ENCODE measurements at regions of chr15 and their contacts with region 1.

Region 1: DNA sequence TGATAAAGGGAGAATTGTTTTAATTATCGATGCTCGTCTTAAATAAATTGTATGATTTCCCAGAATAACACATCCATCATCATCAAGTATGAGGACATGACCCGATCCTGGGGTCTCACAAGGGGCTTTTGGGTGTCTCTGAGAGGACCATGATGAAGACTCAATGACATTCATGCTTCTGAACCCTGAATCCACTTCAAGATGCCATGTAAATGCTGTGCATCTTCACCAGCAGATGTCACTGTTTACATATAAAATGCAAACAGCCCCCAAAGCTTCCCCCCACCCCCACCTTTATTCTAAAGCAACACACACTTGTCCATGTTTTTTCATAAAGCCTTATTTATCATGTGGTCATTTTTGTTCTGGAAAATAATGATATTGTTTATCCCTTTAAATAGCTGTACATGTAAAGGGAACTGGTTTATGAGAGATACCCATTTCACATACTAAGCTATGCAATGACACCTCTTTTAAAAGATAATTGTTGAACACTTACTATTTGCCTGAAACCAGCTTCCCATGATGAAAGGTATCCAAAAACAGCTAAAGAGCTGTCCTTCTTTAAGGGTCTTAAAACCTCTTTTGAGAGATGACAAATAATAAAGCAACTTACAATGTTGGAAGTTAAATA is 69.7 kb upstream of the UBE3A start:
- DNase-seq: peak; percentile 52 to 55 (median 54)
- ATAC-seq: peak; percentile 70
- H3K4me3 ChIP-seq: no peak overlapping the region
- H3K27ac ChIP-seq: no peak overlapping the region
- H3K4me1 ChIP-seq: no peaks in the 10 kb centered on the region
- H3K27me3 ChIP-seq: no peaks in the 10 kb centered on the region
- CTCF ChIP-seq: peak; percentile 52 to 76 (median 67); a peak in 5 of 6 replicates
- EP300 ChIP-seq: no peak
- POLR2A ChIP-seq: no peak
- RAD21 ChIP-seq: peak; percentile 60 to 80

Region 2: GRCh38 chr15:25693321-25694237 is 185.1 kb after region 1 on chr15:
- CTCF ChIA-PET with region 1: no interaction called
- POLR2A ChIA-PET with region 1: no interaction called
- in situ Hi-C with region 1: no loop called
- intact Hi-C with region 1: loop called (anchors 10 kb)
- DNase-seq: peak; percentile 31 to 46 (median 44)
- ATAC-seq: peak; percentile 91
- H3K4me3 ChIP-seq: no peak overlapping the region
- H3K27ac ChIP-seq: no peak overlapping the region
- H3K4me1 ChIP-seq: no peaks in the 10 kb centered on the region
- H3K27me3 ChIP-seq: peaks cover 0 to 39% of the 10 kb centered on the region in 2 experiments; a peak in 2 of 5 replicates
- CTCF ChIP-seq: peak; percentile 65 to 79 (median 65)
- EP300 ChIP-seq: no peak
- POLR2A ChIP-seq: no peak
- RAD21 ChIP-seq: peak; percentile 33 to 40

Region 3: GRCh38 chr15:26259581-26259980 is 751.1 kb after region 1 on chr15:
- CTCF ChIA-PET with region 1: interaction called, 3 read pairs
- POLR2A ChIA-PET with region 1: no interaction called
- in situ Hi-C with region 1: no loop called
- intact Hi-C with region 1: loop called (anchors 5 kb)
- DNase-seq: no peak
- ATAC-seq: no peak
- H3K4me3 ChIP-seq: no peak overlapping the region
- H3K27ac ChIP-seq: no peak overlapping the region
- H3K4me1 ChIP-seq: no peaks in the 10 kb centered on the region
- H3K27me3 ChIP-seq: no peaks in the 10 kb centered on the region
- CTCF ChIP-seq: no peak
- EP300 ChIP-seq: no peak
- POLR2A ChIP-seq: no peak
- RAD21 ChIP-seq: no peak

Region 4: DNA sequence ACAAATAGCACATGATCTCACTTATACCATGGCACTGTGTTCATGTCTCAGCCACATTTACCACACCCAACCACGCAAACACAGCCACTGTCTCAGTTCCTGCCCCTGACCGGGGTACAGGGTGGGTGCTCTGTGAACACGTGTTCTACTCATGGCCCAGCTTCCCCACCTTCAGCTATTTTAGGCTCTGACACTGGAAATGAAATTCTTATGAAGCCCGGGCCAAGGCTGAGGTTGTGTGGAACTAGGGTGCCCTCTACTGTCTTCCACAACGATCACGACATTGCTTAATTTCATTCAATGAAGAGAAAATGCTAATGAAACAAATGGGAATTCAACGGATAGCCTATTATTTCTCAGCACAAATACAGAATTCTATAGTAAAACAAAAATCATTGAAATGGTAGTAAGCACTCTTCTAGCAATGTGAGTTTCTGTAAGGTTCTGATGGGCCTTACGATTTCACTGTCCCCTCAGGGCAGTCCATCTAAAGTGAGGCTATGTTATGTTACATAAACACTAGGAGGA is 1356.2 kb after region 1 on chr15:
- CTCF ChIA-PET with region 1: no interaction called
- POLR2A ChIA-PET with region 1: interaction called, 3 read pairs
- in situ Hi-C with region 1: loop called (anchors 25 kb)
- intact Hi-C with region 1: loop called (anchors 2 kb)
- DNase-seq: peak; percentile 16 to 54 (median 32)
- ATAC-seq: peak; percentile 81
- H3K4me3 ChIP-seq: no peak overlapping the region
- H3K27ac ChIP-seq: no peak overlapping the region
- H3K4me1 ChIP-seq: peaks cover 0 to 7% of the 10 kb centered on the region in 2 experiments; a peak in 1 of 5 replicates
- H3K27me3 ChIP-seq: peaks cover 0 to 8% of the 10 kb centered on the region in 2 experiments; a peak in 1 of 5 replicates
- CTCF ChIP-seq: peak; percentile 60 to 77 (median 65)
- EP300 ChIP-seq: no peak
- POLR2A ChIP-seq: no peak
- RAD21 ChIP-seq: peak; percentile 59 to 71